ENCODE measurements at regions of chr5 and their contacts with region 1.

Region 1: DNA sequence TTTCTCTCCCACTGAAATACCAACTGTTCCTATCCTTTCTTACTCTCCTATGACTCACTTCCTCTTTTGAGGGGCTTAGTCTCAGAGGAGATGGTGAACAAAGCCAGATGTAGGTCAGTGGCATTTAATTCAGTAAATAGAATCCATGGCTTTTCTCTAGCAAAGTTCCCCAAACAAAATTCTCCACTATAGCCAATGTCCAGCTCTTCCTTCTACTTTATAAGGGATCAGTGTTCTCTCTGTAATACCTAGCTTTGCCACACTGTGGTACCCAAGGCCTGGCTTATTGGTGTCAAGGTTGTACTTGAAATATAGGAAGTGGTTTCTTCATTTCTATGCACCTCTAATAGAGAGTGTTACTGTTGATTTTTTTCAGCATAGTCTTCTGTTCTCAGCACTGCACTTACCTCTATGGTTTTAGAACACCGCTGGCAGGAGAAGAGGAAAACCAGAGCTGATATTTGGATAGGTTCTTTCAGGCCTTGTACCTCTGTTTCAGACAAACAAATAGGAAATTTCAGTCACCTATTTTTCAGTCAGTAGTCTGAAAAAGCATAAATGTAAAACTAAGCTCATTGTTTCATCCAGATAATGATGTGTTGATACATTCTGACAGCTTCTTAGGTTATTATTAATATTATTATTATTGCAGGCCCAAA is 40.6 kb upstream of the ITGA2 start:
- DNase-seq: peak; percentile 59
- CTCF ChIP-seq: peak; percentile 72

Region 2: GRCh38 chr5:52725065-52725746 is 223.3 kb before region 1 on chr5:
- CTCF ChIA-PET with region 1: no interaction called
- POLR2A ChIA-PET with region 1: no interaction called
- DNase-seq: peak; percentile 5
- CTCF ChIP-seq: no peak

Region 3: GRCh38 chr5:52961274-52961681 is 12.7 kb after region 1 on chr5:
- CTCF ChIA-PET with region 1: interaction called, 27 read pairs
- POLR2A ChIA-PET with region 1: no interaction called
- DNase-seq: no peak
- CTCF ChIP-seq: no peak

Region 4: GRCh38 chr5:53089345-53089991 is 140.9 kb after region 1 on chr5:
- CTCF ChIA-PET with region 1: interaction called, 46 read pairs
- POLR2A ChIA-PET with region 1: no interaction called
- DNase-seq: peak; percentile 22
- CTCF ChIP-seq: no peak

Region 5: DNA sequence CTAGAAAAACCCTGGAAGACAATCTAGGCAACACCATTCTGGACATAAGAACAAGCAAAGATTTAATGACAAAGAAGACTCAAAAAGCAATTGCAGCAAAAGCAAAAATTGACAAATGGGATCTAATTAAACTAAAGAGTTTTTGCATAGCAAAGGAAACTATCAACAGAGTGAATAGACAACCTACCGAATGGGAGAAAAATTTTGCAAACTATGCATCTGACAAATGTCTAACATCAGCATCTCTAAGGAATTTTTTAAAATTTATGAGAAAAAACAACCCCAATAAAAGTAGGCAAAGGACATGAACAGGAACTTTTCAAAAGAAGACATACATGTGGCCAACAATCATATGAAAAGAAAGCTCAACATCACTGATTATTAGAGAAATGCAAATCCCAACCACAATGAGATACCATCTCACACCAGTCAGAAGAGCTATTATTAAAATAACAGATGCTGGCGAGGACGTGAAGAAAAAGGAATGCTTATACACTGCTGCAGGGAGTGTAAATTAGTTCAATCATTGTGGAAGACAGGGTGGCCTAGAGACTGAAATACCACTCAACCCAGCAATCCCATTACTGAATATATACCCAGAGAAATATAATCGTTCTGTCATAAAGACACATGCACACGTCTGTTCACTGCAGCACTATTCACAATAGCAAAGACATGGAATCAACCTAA is 157.2 kb after region 1 on chr5:
- CTCF ChIA-PET with region 1: interaction called, 112 read pairs
- POLR2A ChIA-PET with region 1: no interaction called
- DNase-seq: no peak
- CTCF ChIP-seq: no peak

Region 6: GRCh38 chr5:53161876-53162275 is 213.3 kb after region 1 on chr5:
- CTCF ChIA-PET with region 1: no interaction called
- POLR2A ChIA-PET with region 1: no interaction called
- DNase-seq: no peak
- CTCF ChIP-seq: no peak

Region 7: GRCh38 chr5:53243403-53243802 is 294.9 kb after region 1 on chr5:
- CTCF ChIA-PET with region 1: no interaction called
- POLR2A ChIA-PET with region 1: no interaction called
- DNase-seq: no peak
- CTCF ChIP-seq: no peak

Region 8: GRCh38 chr5:54229041-54229780 is 1280.7 kb after region 1 on chr5:
- CTCF ChIA-PET with region 1: interaction called, 12 read pairs
- POLR2A ChIA-PET with region 1: no interaction called
- DNase-seq: peak; percentile 51
- CTCF ChIP-seq: peak; percentile 91